CD8-positive, alpha-beta memory T cell (primary cell): ENCODE measurements at regions of chr20 and their contacts with region 1.

Region 1: DNA sequence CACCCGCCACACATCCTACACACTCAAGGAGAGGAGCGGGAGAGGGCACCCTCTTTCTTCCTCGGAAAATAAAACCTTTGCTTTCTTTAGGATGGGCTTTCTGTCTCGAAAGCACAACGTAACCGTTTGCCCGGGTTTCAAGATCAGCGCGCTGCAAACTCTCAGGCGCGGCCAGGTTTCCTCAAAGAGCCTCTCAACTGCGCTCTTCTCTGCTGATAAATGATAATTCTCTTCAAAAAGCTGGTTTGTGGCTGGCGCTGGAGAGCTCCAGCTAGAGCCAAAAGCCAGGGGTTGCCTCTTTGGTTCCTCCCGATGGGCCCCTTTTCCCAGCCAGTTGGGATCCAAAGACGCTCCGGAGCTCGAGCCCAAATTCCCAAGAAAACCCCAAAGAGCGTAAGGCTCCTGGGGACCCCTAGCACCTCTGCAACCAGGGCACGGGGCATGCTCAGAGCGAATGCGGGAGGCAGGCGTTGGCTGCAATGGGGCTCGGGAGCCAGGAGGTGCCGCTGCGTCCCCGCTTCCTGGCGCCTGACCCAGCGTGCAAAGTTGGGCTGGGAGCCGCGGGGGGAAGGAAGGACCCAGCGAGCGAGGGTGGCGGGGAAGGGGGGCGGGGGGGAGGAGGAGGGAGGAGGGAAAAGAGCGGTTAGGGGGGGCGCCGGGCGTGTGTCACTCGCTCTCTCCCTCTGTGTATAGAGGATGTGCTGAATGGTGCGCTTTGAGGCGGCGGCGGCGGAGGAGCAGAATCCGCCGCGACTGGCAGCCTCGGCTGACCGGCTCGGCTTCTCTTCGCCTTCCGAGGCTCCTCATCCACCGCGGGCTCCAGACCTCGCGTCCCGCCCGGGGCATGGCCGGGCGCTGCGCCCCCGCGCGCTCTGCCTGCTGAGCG is at the start of gene PLCB1:
- DNase-seq: peak; percentile 72 to 91 (median 80)
- H3K4me3 ChIP-seq: peak within 1 kb of the TSS; percentile 56
- H3K4me3 Mint-ChIP-seq: peak within 1 kb of the TSS; percentile 82 to 93 (median 91)
- H3K27ac ChIP-seq: no peak within 1 kb of the TSS
- H3K27ac Mint-ChIP-seq: peak within 1 kb of the TSS in 7 of 8 donors; percentile 48 to 88 (median 75)
- H3K4me1 ChIP-seq: peaks cover 12% of the 10 kb centered on the region
- H3K4me1 Mint-ChIP-seq: peaks cover 27 to 38% (median 34%) of the 10 kb centered on the region in 3 donors
- H3K27me3 ChIP-seq: peaks cover 13% of the 10 kb centered on the region
- H3K27me3 Mint-ChIP-seq: peaks cover 8 to 11% of the 10 kb centered on the region in 2 donors
- total RNA-seq, gene PLCB1: 8.5 to 9.9 TPM

Region 2: GRCh38 chr20:8305449-8305978 is 173.7 kb after region 1 on chr20:
- CTCF ChIA-PET with region 1: interaction called, 13 read pairs
- POLR2A ChIA-PET with region 1: no interaction called
- DNase-seq: peak; percentile 55 to 85 (median 68)
- H3K4me3 ChIP-seq: no peak overlapping the region
- H3K4me3 Mint-ChIP-seq: peak overlapping the region in 2 of 7 donors; percentile 19 to 30
- H3K27ac ChIP-seq: no peak overlapping the region
- H3K27ac Mint-ChIP-seq: peak overlapping the region in 5 of 8 donors; percentile 1 to 62 (median 26)
- H3K4me1 ChIP-seq: peaks cover 8% of the 10 kb centered on the region
- H3K4me1 Mint-ChIP-seq: peaks cover 10 to 12% (median 12%) of the 10 kb centered on the region in 3 donors
- H3K27me3 ChIP-seq: no peaks in the 10 kb centered on the region
- H3K27me3 Mint-ChIP-seq: no peaks in the 10 kb centered on the region

Region 3: GRCh38 chr20:8389381-8390036 is 257.7 kb after region 1 on chr20:
- CTCF ChIA-PET with region 1: interaction called, 20 read pairs
- POLR2A ChIA-PET with region 1: no interaction called
- DNase-seq: peak in 2 of 5 donors; percentile 17 to 18
- H3K4me3 ChIP-seq: no peak overlapping the region
- H3K4me3 Mint-ChIP-seq: no peak overlapping the region
- H3K27ac ChIP-seq: no peak overlapping the region
- H3K27ac Mint-ChIP-seq: peak overlapping the region in 2 of 8 donors; percentile 10 to 22
- H3K4me1 ChIP-seq: no peaks in the 10 kb centered on the region
- H3K4me1 Mint-ChIP-seq: peaks cover 4 to 25% (median 8%) of the 10 kb centered on the region in 3 donors
- H3K27me3 ChIP-seq: no peaks in the 10 kb centered on the region
- H3K27me3 Mint-ChIP-seq: no peaks in the 10 kb centered on the region

Region 4: DNA sequence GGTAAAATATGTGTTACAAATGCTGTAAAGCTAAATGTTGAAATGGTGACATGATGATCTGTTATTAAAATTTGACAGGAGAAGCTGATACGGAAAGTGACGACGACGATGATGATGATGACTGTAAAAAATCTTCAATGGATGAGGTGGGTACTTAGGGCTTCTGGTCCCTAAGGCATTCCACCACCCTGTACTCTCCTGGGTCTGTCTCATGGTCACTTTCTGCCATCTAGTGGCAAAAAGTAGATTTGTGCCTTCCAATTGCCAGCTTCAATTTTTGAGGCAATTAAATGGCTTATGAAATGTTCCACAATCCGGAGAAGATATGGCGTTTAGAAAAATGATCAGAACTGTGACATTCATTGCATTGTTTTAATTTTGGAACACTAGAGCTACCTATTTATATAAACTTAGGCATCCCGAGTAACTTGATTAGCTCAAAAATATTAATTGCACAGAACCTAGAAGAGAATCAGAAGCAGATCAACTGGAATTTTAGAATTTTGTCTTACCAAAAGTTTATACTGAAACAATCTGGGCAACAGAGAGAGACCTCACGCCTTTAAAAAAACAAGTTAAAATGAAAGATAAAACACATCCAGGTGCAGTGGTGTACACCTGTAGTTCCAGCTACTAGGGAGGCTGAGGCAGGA is 590.6 kb after region 1 on chr20:
- CTCF ChIA-PET with region 1: interaction called, 15 read pairs
- POLR2A ChIA-PET with region 1: no interaction called
- DNase-seq: peak in 2 of 5 donors; percentile 11 to 35
- H3K4me3 ChIP-seq: no peak overlapping the region
- H3K4me3 Mint-ChIP-seq: no peak overlapping the region
- H3K27ac ChIP-seq: no peak overlapping the region
- H3K27ac Mint-ChIP-seq: no peak overlapping the region
- H3K4me1 ChIP-seq: no peaks in the 10 kb centered on the region
- H3K4me1 Mint-ChIP-seq: no peaks in the 10 kb centered on the region
- H3K27me3 ChIP-seq: no peaks in the 10 kb centered on the region
- H3K27me3 Mint-ChIP-seq: no peaks in the 10 kb centered on the region